ENCODE measurements at regions of chr11 and their contacts with region 1.

Region 1: DNA sequence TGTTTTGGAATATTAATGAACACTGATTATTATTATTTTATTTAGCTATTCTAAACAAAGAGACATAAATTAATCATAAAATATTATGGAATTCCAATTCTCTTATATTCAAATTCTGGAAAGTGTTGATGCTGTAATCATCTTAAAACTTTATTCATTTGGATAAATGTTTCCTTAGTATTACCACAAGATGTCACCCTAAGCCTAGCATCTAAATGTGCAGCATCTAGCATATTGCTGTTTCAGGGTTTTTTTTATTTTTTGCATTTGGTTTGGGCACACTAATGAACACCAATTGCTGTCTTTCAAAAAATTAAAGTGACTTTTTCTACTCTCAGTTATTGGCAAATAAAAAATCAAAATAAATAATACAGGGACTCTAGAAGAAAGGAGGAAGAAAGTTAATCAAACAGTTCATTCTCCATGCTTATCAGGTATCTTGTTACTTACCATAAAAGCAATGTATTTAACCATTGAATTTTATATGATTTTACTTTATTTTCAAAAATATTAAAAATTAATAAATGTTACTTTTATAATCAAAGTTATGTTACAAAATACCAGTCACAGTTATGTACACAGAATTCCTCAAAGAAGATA is 31.8 kb downstream of the DLG2 start:
- DNase-seq: no peak
- ATAC-seq: no peak
- H3K4me3 Mint-ChIP-seq: no peak overlapping the region
- H3K27ac Mint-ChIP-seq: no peak overlapping the region
- H3K4me1 Mint-ChIP-seq: no peaks in the 10 kb centered on the region
- H3K27me3 Mint-ChIP-seq: no peaks in the 10 kb centered on the region
- CTCF ChIP-seq: peak; percentile 35

Region 2: DNA sequence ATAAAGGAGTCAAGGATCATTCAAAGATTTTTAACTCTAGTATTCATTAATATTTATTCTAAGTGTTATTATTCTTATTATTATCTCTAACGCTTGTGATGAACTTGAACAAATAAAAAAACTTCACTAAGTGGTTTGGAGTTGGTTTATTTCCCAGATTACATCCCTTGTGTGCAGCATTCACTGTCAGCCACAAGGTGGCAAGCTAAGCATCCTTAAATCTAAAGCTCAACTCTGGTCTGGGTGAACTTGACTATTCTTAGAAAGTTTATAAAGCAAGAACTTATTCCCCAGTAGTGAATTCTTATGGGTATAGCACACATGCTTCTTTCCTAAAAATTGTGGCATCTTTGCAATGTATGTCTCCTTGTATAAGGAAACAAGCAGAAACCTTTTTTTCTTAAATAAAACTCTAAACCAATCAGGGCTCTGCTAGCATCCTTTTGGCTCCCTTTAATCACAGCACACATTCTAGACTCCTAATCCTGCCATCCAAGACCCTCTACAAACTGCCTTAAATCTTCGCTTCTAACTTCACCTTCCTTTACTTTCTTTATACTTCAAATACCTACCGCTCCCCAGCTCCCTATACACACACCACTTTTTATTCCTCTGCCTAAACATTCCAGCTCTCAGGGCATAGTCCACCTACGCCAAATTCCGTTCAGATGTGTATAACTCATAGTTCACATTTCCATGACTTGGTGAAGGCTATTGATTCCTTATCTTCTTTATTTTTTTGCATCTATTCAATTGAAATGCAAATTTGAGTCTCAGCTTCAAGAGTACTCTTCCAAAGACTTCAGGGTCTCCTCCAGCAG is 1037.1 kb before region 1 on chr11:
- CTCF ChIA-PET with region 1: interaction called, 35 read pairs
- POLR2A ChIA-PET with region 1: no interaction called
- intact Hi-C with region 1: loop called (anchors 1 kb)
- DNase-seq: no peak
- ATAC-seq: peak; percentile 69
- H3K4me3 Mint-ChIP-seq: no peak overlapping the region
- H3K27ac Mint-ChIP-seq: no peak overlapping the region
- H3K4me1 Mint-ChIP-seq: peaks cover 3% of the 10 kb centered on the region
- H3K27me3 Mint-ChIP-seq: peaks cover 7% of the 10 kb centered on the region
- CTCF ChIP-seq: no peak

Region 3: DNA sequence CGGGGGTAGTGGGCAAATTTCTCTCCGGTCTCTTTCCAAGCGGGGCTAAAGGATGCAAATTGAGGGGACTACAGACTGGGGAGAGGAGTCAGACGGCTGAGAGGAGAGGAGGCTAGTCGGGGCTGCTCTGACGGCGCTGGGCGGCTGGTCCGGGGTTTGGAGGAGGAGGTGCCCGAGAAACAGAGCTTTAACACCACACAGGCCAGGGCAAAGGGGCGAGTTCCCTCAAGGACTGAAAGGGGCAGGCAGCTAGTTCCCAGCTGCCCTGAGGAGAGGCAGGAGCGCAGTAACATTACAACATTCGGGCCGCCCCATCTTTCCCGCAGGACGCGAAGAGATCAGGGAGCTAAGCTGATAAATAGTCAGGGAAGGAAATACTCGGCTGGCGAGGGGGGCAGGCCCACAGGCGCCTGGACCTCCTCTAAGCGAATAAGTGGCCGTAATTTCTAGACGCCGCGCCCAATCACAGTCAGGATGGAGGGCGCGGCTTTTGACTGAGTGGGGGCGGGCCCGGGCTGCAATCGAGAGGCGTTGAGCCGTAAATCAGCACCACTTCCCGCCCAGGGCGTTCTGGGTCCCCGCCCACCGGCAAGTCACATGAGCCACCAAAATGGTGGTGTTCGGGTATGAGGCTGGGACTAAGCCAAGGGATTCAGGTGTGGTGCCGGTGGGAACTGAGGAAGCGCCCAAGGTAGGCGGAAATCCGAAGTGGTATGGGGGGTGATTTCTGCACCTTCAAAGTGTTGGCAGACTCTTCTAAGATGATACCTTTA is 32.8 kb after region 1 on chr11 and contains the start of gene TMEM126B:
- CTCF ChIA-PET with region 1: no interaction called
- POLR2A ChIA-PET with region 1: no interaction called
- intact Hi-C with region 1: loop called (anchors 2 kb)
- DNase-seq: peak; percentile 89
- ATAC-seq: peak; percentile 98
- H3K4me3 Mint-ChIP-seq: peak within 1 kb of the TSS; percentile 99
- H3K27ac Mint-ChIP-seq: peak within 1 kb of the TSS; percentile 94
- H3K4me1 Mint-ChIP-seq: peaks cover 28% of the 10 kb centered on the region
- H3K27me3 Mint-ChIP-seq: peaks cover 2% of the 10 kb centered on the region
- CTCF ChIP-seq: no peak
- total RNA-seq, gene TMEM126B: 35.5 and 43.4 TPM in 2 replicates

Region 4: GRCh38 chr11:85826116-85826855 is 230.9 kb after region 1 on chr11:
- CTCF ChIA-PET with region 1: no interaction called
- POLR2A ChIA-PET with region 1: no interaction called
- intact Hi-C with region 1: loop called (anchors 1 kb)
- DNase-seq: no peak
- ATAC-seq: no peak
- H3K4me3 Mint-ChIP-seq: no peak overlapping the region
- H3K27ac Mint-ChIP-seq: no peak overlapping the region
- H3K4me1 Mint-ChIP-seq: no peaks in the 10 kb centered on the region
- H3K27me3 Mint-ChIP-seq: no peaks in the 10 kb centered on the region
- CTCF ChIP-seq: no peak

Region 5: GRCh38 chr11:86456052-86456939 is 860.9 kb after region 1 on chr11:
- CTCF ChIA-PET with region 1: no interaction called
- POLR2A ChIA-PET with region 1: no interaction called
- intact Hi-C with region 1: loop called (anchors 5 kb)
- DNase-seq: peak; percentile 45
- ATAC-seq: peak; percentile 47
- H3K4me3 Mint-ChIP-seq: no peak overlapping the region
- H3K27ac Mint-ChIP-seq: no peak overlapping the region
- H3K4me1 Mint-ChIP-seq: peaks cover 2% of the 10 kb centered on the region
- H3K27me3 Mint-ChIP-seq: no peaks in the 10 kb centered on the region
- CTCF ChIP-seq: peak; percentile 65

Region 6: GRCh38 chr11:86818466-86819192 is 1223.2 kb after region 1 on chr11:
- CTCF ChIA-PET with region 1: no interaction called
- POLR2A ChIA-PET with region 1: no interaction called
- intact Hi-C with region 1: loop called (anchors 1 kb)
- DNase-seq: no peak
- ATAC-seq: no peak
- H3K4me3 Mint-ChIP-seq: no peak overlapping the region
- H3K27ac Mint-ChIP-seq: no peak overlapping the region
- H3K4me1 Mint-ChIP-seq: no peaks in the 10 kb centered on the region
- H3K27me3 Mint-ChIP-seq: peaks cover 12% of the 10 kb centered on the region
- CTCF ChIP-seq: no peak

Region 7: DNA sequence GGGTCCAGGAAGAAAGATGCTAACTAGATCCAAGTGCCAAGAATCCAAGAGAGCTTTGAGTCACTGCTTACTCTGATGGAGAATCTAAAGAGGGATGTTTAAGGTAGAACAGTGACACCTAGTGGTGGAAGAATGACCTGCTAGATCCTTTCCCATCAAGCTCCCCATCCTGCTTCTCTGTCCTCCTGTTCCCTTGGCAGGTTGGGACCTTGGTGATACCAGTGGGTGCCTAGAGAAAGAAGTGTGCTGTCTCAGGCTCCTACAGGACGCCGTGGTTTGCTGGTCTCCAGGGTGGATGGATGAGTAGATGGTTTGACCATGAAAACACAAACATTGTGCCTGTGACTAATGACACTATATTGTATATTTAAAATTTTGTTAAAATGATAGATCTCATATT is 1826.0 kb after region 1 on chr11:
- CTCF ChIA-PET with region 1: no interaction called
- POLR2A ChIA-PET with region 1: no interaction called
- intact Hi-C with region 1: loop called (anchors 10 kb)
- DNase-seq: no peak
- ATAC-seq: peak; percentile 47
- H3K4me3 Mint-ChIP-seq: no peak overlapping the region
- H3K27ac Mint-ChIP-seq: no peak overlapping the region
- H3K4me1 Mint-ChIP-seq: no peaks in the 10 kb centered on the region
- H3K27me3 Mint-ChIP-seq: no peaks in the 10 kb centered on the region
- CTCF ChIP-seq: no peak